Endothelial cell of umbilical vein (primary cell): ENCODE measurements at regions of chrX and their contacts with region 1.

Region 1: DNA sequence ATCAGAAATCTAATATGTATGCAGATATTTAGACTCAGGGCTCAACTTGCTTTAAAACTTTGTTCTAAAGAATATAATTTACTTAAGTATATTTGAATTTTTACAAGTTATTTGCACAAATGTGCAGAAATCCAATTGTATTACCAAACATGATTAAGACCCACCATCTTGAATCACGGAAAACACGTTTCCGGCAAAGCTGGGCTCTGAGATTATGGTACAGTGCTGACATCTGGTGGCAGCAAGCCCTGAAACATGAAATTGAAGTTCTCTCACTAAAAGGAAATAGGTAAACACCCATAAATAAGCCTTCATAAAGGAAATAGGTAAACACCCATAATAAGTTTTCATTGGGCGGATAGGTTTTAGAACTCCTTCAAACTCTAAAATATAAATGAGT is 98.3 kb upstream of the MAOA start:
- DNase-seq: peak; percentile 59
- H3K4me3 ChIP-seq: no peak overlapping the region
- H3K27ac ChIP-seq: no peak overlapping the region
- H3K4me1 ChIP-seq: no peaks in the 10 kb centered on the region
- H3K27me3 ChIP-seq: no peaks in the 10 kb centered on the region
- CTCF ChIP-seq: peak; percentile 29 to 55
- POLR2A ChIP-seq: no peak

Region 2: DNA sequence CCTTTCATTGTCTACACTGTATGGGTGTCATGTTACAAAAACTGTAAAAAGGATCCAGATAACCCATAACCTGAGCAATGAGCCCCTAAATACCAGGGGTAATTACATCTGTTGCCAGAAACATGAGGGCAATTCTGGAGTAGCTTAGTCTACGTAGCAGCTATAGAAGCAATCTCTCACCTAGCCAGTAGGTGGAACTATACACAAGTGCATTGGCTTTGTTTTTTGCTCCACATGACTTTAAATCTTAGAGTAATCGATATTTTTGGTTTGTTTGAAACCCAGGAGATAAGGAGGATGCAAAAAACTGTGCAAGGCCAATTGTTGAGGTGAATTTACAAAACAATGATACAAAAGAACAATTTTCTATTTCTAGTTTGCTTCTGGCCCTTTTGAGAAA is 1776.3 kb before region 1 on chrX:
- CTCF ChIA-PET with region 1: interaction called, 16 read pairs
- POLR2A ChIA-PET with region 1: no interaction called
- dilution Hi-C with region 1: no loop called
- intact Hi-C with region 1: loop called (anchors 5 kb)
- DNase-seq: peak; percentile 49
- H3K4me3 ChIP-seq: no peak overlapping the region
- H3K27ac ChIP-seq: no peak overlapping the region
- H3K4me1 ChIP-seq: peaks cover 12% of the 10 kb centered on the region
- H3K27me3 ChIP-seq: no peaks in the 10 kb centered on the region
- CTCF ChIP-seq: peak; percentile 48 to 49
- POLR2A ChIP-seq: no peak

Region 3: DNA sequence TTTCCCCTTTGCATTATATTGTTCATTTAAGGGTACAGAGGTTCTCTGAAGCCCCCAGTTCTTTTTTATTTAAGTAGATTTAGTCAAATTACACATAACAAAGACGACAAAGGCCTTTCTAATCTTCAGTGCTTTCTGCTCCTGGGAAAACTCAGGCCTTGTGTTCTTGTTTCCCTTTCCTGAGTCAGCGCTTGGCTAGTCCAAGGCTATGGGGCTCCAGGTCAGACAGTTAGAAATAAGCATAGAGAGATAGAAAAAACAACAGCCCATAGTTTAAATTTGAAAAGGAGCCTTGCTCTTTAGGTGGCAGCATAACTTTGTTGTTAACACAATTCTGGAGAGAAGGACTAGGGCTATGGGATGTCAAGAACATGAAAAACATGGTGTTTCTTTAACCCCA is 877.1 kb before region 1 on chrX:
- CTCF ChIA-PET with region 1: no interaction called
- POLR2A ChIA-PET with region 1: no interaction called
- dilution Hi-C with region 1: no loop called
- intact Hi-C with region 1: loop called (anchors 5 kb)
- DNase-seq: peak; percentile 85
- H3K4me3 ChIP-seq: no peak overlapping the region
- H3K27ac ChIP-seq: no peak overlapping the region
- H3K4me1 ChIP-seq: no peaks in the 10 kb centered on the region
- H3K27me3 ChIP-seq: no peaks in the 10 kb centered on the region
- CTCF ChIP-seq: no peak
- POLR2A ChIP-seq: no peak

Region 4: DNA sequence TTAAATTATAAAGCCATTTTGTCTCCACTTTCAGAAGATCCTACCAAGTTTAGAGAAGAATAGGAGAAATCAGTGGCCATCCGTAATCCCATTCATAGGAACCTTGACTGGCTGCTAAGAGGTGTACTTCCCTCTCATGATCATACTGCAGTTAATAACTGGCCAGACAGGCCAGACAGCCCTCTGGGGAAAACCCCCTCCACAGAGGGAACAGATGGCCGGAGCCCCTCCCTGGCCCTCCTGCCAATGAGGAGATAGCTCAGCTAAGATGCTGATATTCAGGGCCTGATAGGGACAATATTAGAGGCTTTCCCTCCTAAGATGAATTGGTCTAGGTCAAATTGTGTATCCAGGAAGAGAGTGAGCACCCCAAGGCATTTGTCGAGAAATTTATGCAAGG is 101.7 kb before region 1 on chrX:
- CTCF ChIA-PET with region 1: no interaction called
- POLR2A ChIA-PET with region 1: no interaction called
- dilution Hi-C with region 1: no loop called
- intact Hi-C with region 1: no loop called
- DNase-seq: no peak
- H3K4me3 ChIP-seq: no peak overlapping the region
- H3K27ac ChIP-seq: no peak overlapping the region
- H3K4me1 ChIP-seq: no peaks in the 10 kb centered on the region
- H3K27me3 ChIP-seq: no peaks in the 10 kb centered on the region
- CTCF ChIP-seq: no peak
- POLR2A ChIP-seq: no peak

Region 5: DNA sequence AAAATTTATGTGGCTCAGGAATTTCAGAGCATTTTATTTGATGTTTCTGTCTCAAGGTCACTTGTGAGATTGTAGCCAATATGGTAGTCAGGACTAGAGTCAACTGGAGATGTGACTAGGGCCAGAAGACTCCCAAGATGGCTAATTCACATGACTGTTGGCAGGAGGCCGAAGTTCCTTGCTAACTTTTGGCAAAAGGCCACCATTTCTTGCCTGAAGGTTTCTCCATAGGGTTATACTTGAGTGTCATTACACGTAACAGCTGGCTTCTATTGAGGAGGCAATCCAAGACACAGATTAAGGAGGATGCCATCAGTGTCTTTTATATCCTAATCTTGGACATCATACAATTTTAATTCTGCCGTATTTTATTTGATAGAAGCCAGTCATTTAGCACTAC is 64.0 kb before region 1 on chrX:
- CTCF ChIA-PET with region 1: no interaction called
- POLR2A ChIA-PET with region 1: no interaction called
- dilution Hi-C with region 1: no loop called
- intact Hi-C with region 1: no loop called
- DNase-seq: no peak
- H3K4me3 ChIP-seq: no peak overlapping the region
- H3K27ac ChIP-seq: no peak overlapping the region
- H3K4me1 ChIP-seq: no peaks in the 10 kb centered on the region
- H3K27me3 ChIP-seq: no peaks in the 10 kb centered on the region
- CTCF ChIP-seq: no peak
- POLR2A ChIP-seq: no peak

Region 6: DNA sequence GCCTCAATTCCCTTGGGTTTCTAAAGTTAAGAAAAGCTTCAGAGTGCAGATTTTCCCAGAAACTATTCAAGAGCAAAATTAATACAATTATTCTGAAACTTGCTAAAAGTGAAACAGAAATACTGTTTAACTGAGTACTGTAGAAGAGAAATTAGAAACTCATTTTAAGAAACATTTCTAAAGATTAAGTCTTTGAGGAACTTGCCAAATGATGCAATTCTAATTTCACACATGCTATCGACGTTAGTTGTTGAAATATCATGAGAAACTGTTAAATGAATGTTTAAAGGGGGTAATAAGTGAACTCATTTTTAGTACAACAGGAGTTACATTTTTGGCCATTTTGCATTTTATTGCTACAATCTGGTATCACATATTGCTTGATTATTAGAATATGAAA is 27.0 kb before region 1 on chrX:
- CTCF ChIA-PET with region 1: no interaction called
- POLR2A ChIA-PET with region 1: no interaction called
- dilution Hi-C with region 1: no loop called
- intact Hi-C with region 1: no loop called
- DNase-seq: no peak
- H3K4me3 ChIP-seq: no peak overlapping the region
- H3K27ac ChIP-seq: no peak overlapping the region
- H3K4me1 ChIP-seq: no peaks in the 10 kb centered on the region
- H3K27me3 ChIP-seq: no peaks in the 10 kb centered on the region
- CTCF ChIP-seq: no peak
- POLR2A ChIP-seq: no peak

Region 7: DNA sequence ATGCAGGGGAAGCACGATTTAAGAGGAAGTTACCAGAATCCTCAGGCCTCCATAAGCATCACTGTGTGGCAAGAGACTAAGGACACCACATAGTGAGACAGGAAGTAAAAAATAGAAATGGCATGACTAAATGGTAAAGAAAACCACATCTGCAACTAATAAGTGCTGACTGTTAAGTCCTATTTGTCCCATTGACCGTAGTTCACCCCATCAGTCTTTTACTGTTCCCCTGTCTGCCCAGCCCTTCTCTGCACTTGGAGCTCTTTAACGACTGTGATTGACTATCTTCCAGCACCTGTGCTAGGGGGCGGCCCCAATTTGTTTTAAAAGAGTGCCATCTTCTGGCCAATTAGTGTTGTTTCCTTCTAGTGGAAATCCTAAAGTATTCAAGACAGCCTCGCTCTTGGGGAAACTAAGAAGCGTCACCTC is 192.5 kb after region 1 on chrX:
- CTCF ChIA-PET with region 1: interaction called, 81 read pairs
- POLR2A ChIA-PET with region 1: no interaction called
- dilution Hi-C with region 1: no loop called
- intact Hi-C with region 1: loop called (anchors 1 kb)
- DNase-seq: peak; percentile 57
- H3K4me3 ChIP-seq: no peak overlapping the region
- H3K27ac ChIP-seq: no peak overlapping the region
- H3K4me1 ChIP-seq: no peaks in the 10 kb centered on the region
- H3K27me3 ChIP-seq: no peaks in the 10 kb centered on the region
- CTCF ChIP-seq: peak; percentile 17 to 20
- POLR2A ChIP-seq: no peak

Region 8: GRCh38 chrX:43958529-43958928 is 400.7 kb after region 1 on chrX:
- CTCF ChIA-PET with region 1: interaction called, 4 read pairs
- POLR2A ChIA-PET with region 1: no interaction called
- dilution Hi-C with region 1: no loop called
- intact Hi-C with region 1: loop called (anchors 5 kb)
- DNase-seq: peak; percentile 77
- H3K4me3 ChIP-seq: no peak overlapping the region
- H3K27ac ChIP-seq: no peak overlapping the region
- H3K4me1 ChIP-seq: no peaks in the 10 kb centered on the region
- H3K27me3 ChIP-seq: no peaks in the 10 kb centered on the region
- CTCF ChIP-seq: peak; percentile 54 to 56
- POLR2A ChIP-seq: no peak

Region 9: DNA sequence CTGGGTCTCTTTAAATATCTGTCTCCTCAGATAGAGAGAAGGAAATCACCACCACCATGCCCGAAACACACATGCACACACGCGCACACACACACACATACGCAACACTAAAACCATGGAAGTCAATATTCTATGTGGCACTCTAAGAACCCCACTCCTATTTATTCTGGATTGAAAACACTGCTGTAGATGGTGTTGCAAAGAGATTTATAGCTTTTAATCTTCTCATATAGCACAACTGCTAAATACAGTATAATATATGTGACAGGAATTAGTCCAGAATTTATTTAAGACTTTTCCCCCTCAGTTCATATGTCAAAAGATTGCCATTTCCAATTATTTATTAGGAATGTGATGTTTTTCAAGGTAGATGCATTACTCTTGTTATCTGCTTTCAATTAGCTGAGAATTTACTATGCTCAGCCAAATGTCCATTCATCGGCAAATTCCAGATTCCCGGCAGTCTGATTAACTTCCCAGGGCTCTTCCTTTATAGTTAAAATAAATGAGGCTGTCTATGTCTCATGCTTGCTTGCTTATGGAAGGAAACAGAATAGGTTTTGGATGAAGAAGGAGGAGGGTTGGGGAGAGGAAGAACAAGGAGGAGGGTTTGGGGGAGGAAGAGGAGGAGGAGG is 530.8 kb after region 1 on chrX:
- CTCF ChIA-PET with region 1: no interaction called
- POLR2A ChIA-PET with region 1: no interaction called
- dilution Hi-C with region 1: no loop called
- intact Hi-C with region 1: no loop called
- DNase-seq: no peak
- H3K4me3 ChIP-seq: no peak overlapping the region
- H3K27ac ChIP-seq: no peak overlapping the region
- H3K4me1 ChIP-seq: no peaks in the 10 kb centered on the region
- H3K27me3 ChIP-seq: no peaks in the 10 kb centered on the region
- CTCF ChIP-seq: no peak
- POLR2A ChIP-seq: no peak